Transverse colon (tissue), 4 donors: ENCODE measurements at regions of chr9 and their contacts with region 1.

Region 1: GRCh38 chr9:11833056-11833455 is 860.1 kb upstream of the TYRP1 start:
- DNase-seq: no peak
- H3K4me3 ChIP-seq: no peak overlapping the region
- H3K27ac ChIP-seq: no peak overlapping the region
- H3K4me1 ChIP-seq: no peaks in the 10 kb centered on the region
- H3K27me3 ChIP-seq: no peaks in the 10 kb centered on the region
- CTCF ChIP-seq: no peak
- EP300 ChIP-seq: no peak
- POLR2A ChIP-seq: no peak

Region 2: DNA sequence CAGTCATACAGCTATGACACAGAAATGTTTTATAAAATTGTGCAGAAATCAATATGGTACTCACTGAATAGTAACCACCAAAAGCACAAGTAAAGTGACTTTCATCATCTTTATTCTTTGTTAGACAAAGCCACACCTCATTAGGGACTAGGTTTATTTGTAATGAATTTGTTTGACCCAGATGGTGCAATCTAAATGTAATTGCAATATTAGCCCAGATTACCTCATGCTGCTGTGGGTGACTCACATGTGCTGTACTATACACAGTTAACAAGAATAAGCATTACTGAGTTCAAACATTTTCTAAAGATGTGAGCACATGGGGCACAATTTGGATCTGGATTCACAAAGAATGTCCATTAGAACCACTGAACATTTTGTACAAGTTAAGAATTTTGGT is 100.9 kb after region 1 on chr9:
- in situ Hi-C with region 1: loop called in 1 of 4 experiments (anchors 25 kb)
- intact Hi-C with region 1: no loop called
- DNase-seq: no peak
- H3K4me3 ChIP-seq: no peak overlapping the region
- H3K27ac ChIP-seq: no peak overlapping the region
- H3K4me1 ChIP-seq: no peaks in the 10 kb centered on the region
- H3K27me3 ChIP-seq: no peaks in the 10 kb centered on the region
- CTCF ChIP-seq: no peak
- EP300 ChIP-seq: no peak
- POLR2A ChIP-seq: no peak